CD8-positive, alpha-beta memory T cell (primary cell): ENCODE measurements at regions of chr10 and their contacts with region 1.

Region 1: DNA sequence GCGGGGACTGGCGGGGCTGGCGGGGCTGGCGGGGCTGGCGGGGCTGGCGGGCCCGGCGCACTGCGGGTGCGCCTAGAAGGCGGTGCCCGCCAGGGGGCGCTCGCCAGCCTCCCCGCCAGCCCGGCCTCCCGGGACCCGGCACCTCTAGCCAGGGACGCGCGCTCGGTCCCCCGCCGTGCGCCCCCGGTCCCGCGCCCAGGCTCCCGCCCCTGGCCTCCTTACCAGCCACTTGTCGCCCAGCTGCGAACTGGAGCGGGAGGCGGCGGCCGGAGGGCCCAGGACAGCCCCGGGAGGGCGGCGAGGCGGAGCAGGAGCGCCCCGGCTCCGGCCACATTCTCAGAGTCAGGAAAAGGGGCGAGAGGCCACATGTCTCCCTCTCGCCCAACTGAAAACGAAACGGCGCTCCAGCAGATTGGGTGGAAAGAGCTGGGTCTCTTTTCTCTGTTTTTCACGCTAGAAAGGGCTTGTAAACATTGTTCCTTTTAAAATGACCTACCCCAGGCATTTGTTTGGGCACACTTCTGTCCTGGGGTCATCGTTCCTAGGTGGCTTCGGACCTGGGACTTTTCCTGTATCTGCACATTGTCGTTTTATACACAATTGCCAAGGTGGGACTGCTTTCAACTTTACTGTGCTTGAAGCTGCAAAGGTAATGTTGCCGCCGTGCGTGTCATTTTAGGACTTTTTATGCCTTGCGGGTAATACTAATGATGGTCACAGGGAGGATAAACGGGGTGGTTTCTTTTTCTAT is 378 bp upstream of the PRKCQ start:
- DNase-seq: peak; percentile 80 to 89 (median 83)
- H3K4me3 ChIP-seq: peak overlapping the region; percentile 81
- H3K4me3 Mint-ChIP-seq: peak overlapping the region; percentile 88 to 98 (median 94)
- H3K27ac ChIP-seq: peak overlapping the region; percentile 83
- H3K27ac Mint-ChIP-seq: peak overlapping the region; percentile 91 to 99 (median 96)
- H3K4me1 ChIP-seq: peaks cover 54% of the 10 kb centered on the region
- H3K4me1 Mint-ChIP-seq: peaks cover 62 to 70% (median 70%) of the 10 kb centered on the region in 3 donors
- H3K27me3 ChIP-seq: no peaks in the 10 kb centered on the region
- H3K27me3 Mint-ChIP-seq: no peaks in the 10 kb centered on the region

Region 2: GRCh38 chr10:6379015-6379776 is 201.3 kb before region 1 on chr10:
- CTCF ChIA-PET with region 1: no interaction called
- POLR2A ChIA-PET with region 1: no interaction called
- DNase-seq: no peak
- H3K4me3 ChIP-seq: no peak overlapping the region
- H3K4me3 Mint-ChIP-seq: no peak overlapping the region
- H3K27ac ChIP-seq: no peak overlapping the region
- H3K27ac Mint-ChIP-seq: no peak overlapping the region
- H3K4me1 ChIP-seq: peaks cover 13% of the 10 kb centered on the region
- H3K4me1 Mint-ChIP-seq: peaks cover 10 to 16% (median 10%) of the 10 kb centered on the region in 3 donors
- H3K27me3 ChIP-seq: no peaks in the 10 kb centered on the region
- H3K27me3 Mint-ChIP-seq: peaks cover 0 to 4% of the 10 kb centered on the region in 2 donors

Region 3: DNA sequence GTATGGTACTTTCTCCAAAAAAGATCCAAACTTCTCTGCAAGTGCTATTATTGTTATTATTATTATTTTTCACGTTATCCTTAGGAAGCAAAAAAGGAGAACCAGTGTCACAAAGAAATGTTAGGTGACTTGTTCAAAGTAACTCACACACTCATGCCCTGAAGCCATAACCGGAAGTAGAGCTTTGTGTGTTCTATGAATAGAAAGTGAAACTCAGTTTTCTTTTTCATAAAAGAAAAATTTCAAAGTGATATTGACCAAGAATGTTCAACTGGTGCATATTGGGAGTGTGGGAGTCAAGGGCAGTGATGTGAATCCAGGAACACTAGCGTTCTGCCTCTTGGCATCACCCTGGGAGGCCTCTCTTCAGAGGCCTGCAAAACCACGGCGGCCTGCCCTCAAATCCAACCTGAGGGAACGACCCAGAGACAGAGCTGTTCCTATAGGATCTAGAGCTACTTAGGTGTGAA is 106.5 kb before region 1 on chr10:
- CTCF ChIA-PET with region 1: interaction called, 11 read pairs
- POLR2A ChIA-PET with region 1: interaction called, 5 read pairs
- DNase-seq: peak in 4 of 5 donors; percentile 26 to 65 (median 63)
- H3K4me3 ChIP-seq: peak overlapping the region; percentile 67
- H3K4me3 Mint-ChIP-seq: peak overlapping the region; percentile 69 to 91 (median 89)
- H3K27ac ChIP-seq: peak overlapping the region; percentile 76
- H3K27ac Mint-ChIP-seq: peak overlapping the region; percentile 96 to 99 (median 98)
- H3K4me1 ChIP-seq: peaks cover 32% of the 10 kb centered on the region
- H3K4me1 Mint-ChIP-seq: peaks cover 42 to 75% (median 61%) of the 10 kb centered on the region in 3 donors
- H3K27me3 ChIP-seq: no peaks in the 10 kb centered on the region
- H3K27me3 Mint-ChIP-seq: peaks cover 0 to 1% of the 10 kb centered on the region in 2 donors

Region 4: GRCh38 chr10:6542999-6543430 is 37.4 kb before region 1 on chr10:
- CTCF ChIA-PET with region 1: interaction called, 11 read pairs
- POLR2A ChIA-PET with region 1: interaction called, 10 read pairs
- DNase-seq: peak; percentile 18 to 81 (median 70)
- H3K4me3 ChIP-seq: peak overlapping the region; percentile 53
- H3K4me3 Mint-ChIP-seq: peak overlapping the region; percentile 77 to 96 (median 93)
- H3K27ac ChIP-seq: peak overlapping the region; percentile 66
- H3K27ac Mint-ChIP-seq: peak overlapping the region; percentile 96 to 100 (median 100)
- H3K4me1 ChIP-seq: peaks cover 77% of the 10 kb centered on the region
- H3K4me1 Mint-ChIP-seq: peaks cover 70 to 86% (median 77%) of the 10 kb centered on the region in 3 donors
- H3K27me3 ChIP-seq: no peaks in the 10 kb centered on the region
- H3K27me3 Mint-ChIP-seq: peaks cover 0 to 1% of the 10 kb centered on the region in 2 donors

Region 5: GRCh38 chr10:6593241-6593671 is 12.8 kb after region 1 on chr10:
- CTCF ChIA-PET with region 1: interaction called, 39 read pairs
- POLR2A ChIA-PET with region 1: interaction called, 3 read pairs
- DNase-seq: peak in 1 of 5 donors; percentile 66
- H3K4me3 ChIP-seq: no peak overlapping the region
- H3K4me3 Mint-ChIP-seq: peak overlapping the region; percentile 8 to 67 (median 63)
- H3K27ac ChIP-seq: no peak overlapping the region
- H3K27ac Mint-ChIP-seq: peak overlapping the region; percentile 74 to 95 (median 92)
- H3K4me1 ChIP-seq: peaks cover 87% of the 10 kb centered on the region
- H3K4me1 Mint-ChIP-seq: peaks cover 72 to 92% (median 92%) of the 10 kb centered on the region in 3 donors
- H3K27me3 ChIP-seq: no peaks in the 10 kb centered on the region
- H3K27me3 Mint-ChIP-seq: peaks cover 0 to 2% of the 10 kb centered on the region in 2 donors

Region 6: GRCh38 chr10:6647811-6648526 is 67.5 kb after region 1 on chr10:
- CTCF ChIA-PET with region 1: interaction called, 14 read pairs
- POLR2A ChIA-PET with region 1: interaction called, 3 read pairs
- DNase-seq: peak; percentile 50 to 76 (median 65)
- H3K4me3 ChIP-seq: no peak overlapping the region
- H3K4me3 Mint-ChIP-seq: no peak overlapping the region
- H3K27ac ChIP-seq: no peak overlapping the region
- H3K27ac Mint-ChIP-seq: peak overlapping the region in 1 of 8 donors; percentile 19
- H3K4me1 ChIP-seq: peaks cover 15% of the 10 kb centered on the region
- H3K4me1 Mint-ChIP-seq: peaks cover 21 to 32% (median 29%) of the 10 kb centered on the region in 3 donors
- H3K27me3 ChIP-seq: no peaks in the 10 kb centered on the region
- H3K27me3 Mint-ChIP-seq: peaks cover 0 to under 1% of the 10 kb centered on the region in 2 donors